Activated CD4-positive, alpha-beta memory T cell treated with anti-CD3 and anti-CD28 coated beads for 36 hours (primary cell): ENCODE measurements at regions of chr3 and their contacts with region 1.

Region 1: GRCh38 chr3:44729384-44729910 is at the start of gene ZNF501:
- DNase-seq: peak; percentile 92
- H3K4me3 Mint-ChIP-seq: peak within 1 kb of the TSS; percentile 91
- H3K27ac Mint-ChIP-seq: peak within 1 kb of the TSS; percentile 10
- H3K4me1 Mint-ChIP-seq: peaks cover 10% of the 10 kb centered on the region
- H3K27me3 Mint-ChIP-seq: no peaks in the 10 kb centered on the region
- total RNA-seq, gene ZNF501: 1.5 to 2.6 TPM

Region 2: GRCh38 chr3:44624749-44625480 is 104.5 kb before region 1 on chr3 and contains the start of gene ZNF197:
- CTCF ChIA-PET with region 1: no interaction called
- POLR2A ChIA-PET with region 1: no interaction called
- intact Hi-C with region 1: loop called (anchors 5 kb)
- DNase-seq: peak; percentile 78
- H3K4me3 Mint-ChIP-seq: peak within 1 kb of the TSS; percentile 80
- H3K27ac Mint-ChIP-seq: peak within 1 kb of the TSS; percentile 47
- H3K4me1 Mint-ChIP-seq: peaks cover 20% of the 10 kb centered on the region
- H3K27me3 Mint-ChIP-seq: no peaks in the 10 kb centered on the region
- total RNA-seq, gene ZNF197: 9.1 to 9.9 TPM

Region 3: GRCh38 chr3:44685128-44685800 is 44.2 kb before region 1 on chr3:
- CTCF ChIA-PET with region 1: no interaction called
- POLR2A ChIA-PET with region 1: no interaction called
- intact Hi-C with region 1: loop called (anchors 1 kb)
- DNase-seq: peak; percentile 68
- H3K4me3 Mint-ChIP-seq: peak overlapping the region; percentile 70
- H3K27ac Mint-ChIP-seq: no peak overlapping the region
- H3K4me1 Mint-ChIP-seq: peaks cover 11% of the 10 kb centered on the region
- H3K27me3 Mint-ChIP-seq: peaks cover 30% of the 10 kb centered on the region

Region 4: DNA sequence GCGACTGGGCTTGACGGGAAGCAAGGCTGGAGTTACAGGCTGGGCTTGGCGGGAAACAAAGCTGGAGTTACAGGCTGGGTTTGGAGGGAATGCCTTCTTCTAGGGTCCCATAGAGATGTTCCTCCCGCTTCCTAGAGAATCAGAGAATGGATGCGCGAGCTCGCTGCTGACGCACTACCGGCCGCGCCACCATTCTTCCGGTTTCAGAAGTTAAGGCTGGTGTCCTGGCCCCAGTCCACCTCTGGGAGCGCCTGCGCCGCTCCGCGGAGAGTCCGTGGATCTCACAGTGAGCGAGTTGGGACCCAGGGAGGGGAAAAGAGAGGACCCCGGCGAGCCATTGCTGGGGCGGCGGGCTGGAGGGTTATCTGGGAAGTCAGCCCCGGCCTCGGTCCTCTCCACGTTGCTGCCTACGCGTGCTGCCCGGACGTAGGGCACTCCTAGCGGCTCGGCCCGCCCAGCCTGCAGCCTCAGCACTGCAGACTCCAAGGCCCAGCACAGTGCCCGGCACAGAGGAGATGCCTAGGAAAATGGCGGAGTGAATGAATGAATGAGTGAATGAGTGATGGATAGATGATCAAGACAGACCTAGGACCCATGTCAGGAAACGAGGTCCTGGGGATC is 16.9 kb before region 1 on chr3 and contains the start of gene ZNF502:
- CTCF ChIA-PET with region 1: interaction called, 5 read pairs
- POLR2A ChIA-PET with region 1: no interaction called
- intact Hi-C with region 1: loop called (anchors 1 kb)
- DNase-seq: peak; percentile 73
- H3K4me3 Mint-ChIP-seq: peak within 1 kb of the TSS; percentile 80
- H3K27ac Mint-ChIP-seq: no peak within 1 kb of the TSS
- H3K4me1 Mint-ChIP-seq: peaks cover 3% of the 10 kb centered on the region
- H3K27me3 Mint-ChIP-seq: peaks cover 12% of the 10 kb centered on the region
- total RNA-seq, gene ZNF502: 0.69 to 0.77 TPM

Region 5: DNA sequence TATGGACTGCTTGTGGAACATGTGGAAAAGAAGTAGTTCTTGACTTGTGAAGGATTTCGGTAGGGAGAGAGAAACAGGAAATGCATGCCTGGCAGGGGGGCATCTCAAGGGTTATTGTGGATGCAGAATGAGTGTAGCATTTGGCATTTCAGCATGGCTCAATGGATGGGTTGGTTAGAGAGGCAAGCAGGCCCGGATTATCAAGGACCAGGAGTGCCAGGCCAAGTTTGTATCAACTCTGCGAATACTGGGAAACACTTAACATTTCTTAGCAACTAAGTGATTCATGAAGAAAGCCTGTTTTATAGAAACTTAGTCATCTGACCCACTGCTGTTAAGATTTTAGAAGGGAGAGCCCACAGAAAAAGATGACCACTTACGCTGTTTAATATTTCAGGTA is 65.8 kb after region 1 on chr3:
- CTCF ChIA-PET with region 1: no interaction called
- POLR2A ChIA-PET with region 1: no interaction called
- intact Hi-C with region 1: no loop called
- DNase-seq: no peak
- H3K4me3 Mint-ChIP-seq: no peak overlapping the region
- H3K27ac Mint-ChIP-seq: no peak overlapping the region
- H3K4me1 Mint-ChIP-seq: no peaks in the 10 kb centered on the region
- H3K27me3 Mint-ChIP-seq: no peaks in the 10 kb centered on the region